ENCODE measurements at regions of chr3 and their contacts with region 1.

Region 1: DNA sequence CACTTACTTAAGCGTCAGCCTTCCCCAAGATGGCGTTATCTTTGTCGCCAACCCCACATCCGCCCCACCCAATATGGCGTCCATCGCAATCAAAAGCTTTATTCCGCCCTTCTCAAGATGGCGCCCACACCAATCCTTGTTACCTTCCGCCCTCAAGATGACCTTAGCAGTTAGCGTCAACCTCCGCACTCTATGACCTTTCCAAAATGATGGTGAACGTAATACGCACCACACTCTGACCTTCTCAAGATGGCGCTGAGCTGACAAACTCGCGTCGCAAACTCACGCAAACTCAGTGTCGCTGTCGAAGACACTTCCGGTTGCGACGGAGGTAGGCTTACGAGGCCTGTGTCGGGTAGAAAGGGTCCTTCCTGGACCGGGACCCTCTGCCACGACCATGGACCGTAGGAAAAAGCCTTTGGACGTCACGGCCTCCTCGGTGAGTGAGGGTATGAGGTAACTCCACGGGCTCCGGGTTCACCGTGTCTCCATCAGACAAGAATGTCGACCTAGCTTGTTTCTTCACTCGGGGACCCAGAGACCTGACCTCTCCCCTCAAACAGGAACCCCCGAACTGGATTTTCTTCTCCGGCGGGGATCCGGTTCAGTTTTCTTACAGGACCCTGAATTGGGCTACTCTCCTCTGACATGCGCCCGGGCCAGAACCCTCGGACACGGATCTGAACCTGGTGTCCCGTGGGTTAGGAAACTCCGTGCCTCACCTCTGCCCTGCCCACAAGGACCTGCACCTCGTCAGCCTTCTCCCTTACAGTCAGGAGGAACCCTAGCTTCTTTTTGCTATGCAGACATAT is at the start of gene CCDC174:
- DNase-seq: peak; percentile 89 to 98
- H3K4me3 ChIP-seq: peak within 1 kb of the TSS; percentile 64 to 80
- H3K27ac ChIP-seq: peak within 1 kb of the TSS; percentile 77 to 91
- H3K4me1 ChIP-seq: peaks cover 7 to 16% of the 10 kb centered on the region in 2 donors
- H3K27me3 ChIP-seq: no peaks in the 10 kb centered on the region
- CTCF ChIP-seq: no peak
- total RNA-seq, gene CCDC174: 5.5 TPM

Region 2: GRCh38 chr3:14178247-14179113 is 473.2 kb before region 1 on chr3 and contains the starts of genes LSM3 and XPC:
- intact Hi-C with region 1: loop called (anchors 1 kb)
- DNase-seq: peak; percentile 92 to 98
- H3K4me3 ChIP-seq: peak within 1 kb of the TSS; percentile 69 to 71
- H3K27ac ChIP-seq: peak within 1 kb of the TSS; percentile 91 to 99
- H3K4me1 ChIP-seq: peaks cover 0 to 31% of the 10 kb centered on the region in 2 donors
- H3K27me3 ChIP-seq: no peaks in the 10 kb centered on the region
- CTCF ChIP-seq: peak in 1 of 3 experiments; percentile 8
- total RNA-seq, gene LSM3: 3.9 TPM
- total RNA-seq, gene XPC: 48.9 TPM

Region 3: DNA sequence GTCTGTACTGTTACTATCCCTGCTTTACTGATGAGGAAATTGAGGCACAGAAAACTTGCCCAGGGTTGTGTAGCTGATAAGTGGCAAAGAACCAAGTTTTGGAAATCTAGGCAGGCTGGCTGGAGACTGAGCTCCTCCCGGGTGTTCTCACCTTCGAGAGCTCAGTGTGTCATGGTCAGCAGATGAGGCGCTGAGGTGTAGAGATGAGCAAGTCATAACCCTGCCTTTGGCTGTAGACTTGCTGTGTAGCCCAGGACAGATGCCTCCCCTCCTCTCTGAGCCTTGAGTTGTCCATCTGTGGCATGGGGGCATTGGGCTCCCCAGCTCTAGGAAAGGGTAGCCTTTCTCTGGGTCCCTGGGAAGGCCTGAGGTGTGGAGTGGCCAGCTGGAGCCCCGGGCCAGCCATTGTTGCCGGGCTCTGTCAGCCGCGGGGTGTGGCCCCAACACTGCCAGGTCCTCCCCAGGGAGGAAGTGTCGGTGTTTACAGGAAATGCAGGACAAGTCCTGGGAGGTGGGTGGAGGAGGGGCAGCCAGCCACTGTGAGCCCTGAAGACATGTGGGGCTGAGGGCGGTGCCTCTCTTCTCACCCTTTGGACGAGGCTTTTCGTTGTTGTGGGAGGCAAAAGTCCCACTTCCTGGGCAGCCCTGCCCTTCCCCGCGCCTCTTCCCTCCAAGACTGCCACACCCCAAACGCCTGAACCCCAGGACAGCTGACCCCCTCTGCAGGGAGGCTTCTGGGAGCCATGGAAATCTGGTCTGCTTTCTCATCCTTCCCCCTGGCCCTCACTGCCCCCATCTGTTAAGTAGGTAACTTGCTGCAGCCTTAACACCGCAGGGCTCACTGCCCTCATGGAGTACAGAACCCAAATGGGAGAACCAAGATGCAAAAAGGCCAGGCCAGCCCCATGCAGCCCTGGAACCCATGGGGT is 196.2 kb after region 1 on chr3:
- intact Hi-C with region 1: no loop called
- DNase-seq: no peak
- H3K4me3 ChIP-seq: no peak overlapping the region
- H3K27ac ChIP-seq: peak overlapping the region in 1 of 2 donors; percentile 6
- H3K4me1 ChIP-seq: no peaks in the 10 kb centered on the region
- H3K27me3 ChIP-seq: no peaks in the 10 kb centered on the region
- CTCF ChIP-seq: no peak

Region 4: DNA sequence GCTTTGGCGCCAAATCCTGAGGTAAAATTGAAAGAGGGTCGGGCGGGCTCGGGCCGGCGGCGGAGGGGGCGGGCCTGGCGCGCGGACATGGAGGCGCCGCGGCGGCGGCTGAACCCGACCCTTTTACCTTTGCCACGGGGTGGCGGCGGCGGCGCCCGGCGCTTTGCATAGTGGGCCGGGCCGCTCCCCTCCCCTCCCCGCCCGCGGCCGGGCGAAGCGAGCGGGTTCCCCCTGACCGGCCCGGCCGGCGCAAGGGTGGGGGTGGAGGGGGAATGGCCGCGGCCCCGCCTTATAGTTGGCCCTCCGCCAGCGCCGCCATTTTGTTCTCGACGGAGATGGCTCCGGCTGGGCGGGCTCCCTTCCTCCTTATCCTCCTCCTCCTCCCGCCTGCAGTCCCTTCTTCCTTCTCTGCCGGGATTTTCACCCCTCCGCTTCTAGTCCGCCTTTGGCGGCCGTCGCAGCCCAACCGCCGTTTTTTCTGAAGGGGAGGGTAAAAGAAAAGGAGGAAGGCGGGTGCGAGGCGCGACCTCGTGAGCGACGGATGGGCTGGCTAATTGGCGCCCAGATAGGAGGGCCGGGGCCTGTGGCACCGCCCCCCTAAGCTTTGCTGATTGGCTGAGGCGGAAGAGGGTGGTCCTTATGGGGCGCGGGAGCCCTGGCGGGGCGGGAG is 296.4 kb after region 1 on chr3:
- intact Hi-C with region 1: loop called (anchors 2 kb)
- DNase-seq: peak; percentile 80 to 97
- H3K4me3 ChIP-seq: peak overlapping the region; percentile 85 to 96
- H3K27ac ChIP-seq: peak overlapping the region; percentile 97 to 98
- H3K4me1 ChIP-seq: peaks cover 0 to 24% of the 10 kb centered on the region in 2 donors
- H3K27me3 ChIP-seq: no peaks in the 10 kb centered on the region
- CTCF ChIP-seq: no peak

Region 5: DNA sequence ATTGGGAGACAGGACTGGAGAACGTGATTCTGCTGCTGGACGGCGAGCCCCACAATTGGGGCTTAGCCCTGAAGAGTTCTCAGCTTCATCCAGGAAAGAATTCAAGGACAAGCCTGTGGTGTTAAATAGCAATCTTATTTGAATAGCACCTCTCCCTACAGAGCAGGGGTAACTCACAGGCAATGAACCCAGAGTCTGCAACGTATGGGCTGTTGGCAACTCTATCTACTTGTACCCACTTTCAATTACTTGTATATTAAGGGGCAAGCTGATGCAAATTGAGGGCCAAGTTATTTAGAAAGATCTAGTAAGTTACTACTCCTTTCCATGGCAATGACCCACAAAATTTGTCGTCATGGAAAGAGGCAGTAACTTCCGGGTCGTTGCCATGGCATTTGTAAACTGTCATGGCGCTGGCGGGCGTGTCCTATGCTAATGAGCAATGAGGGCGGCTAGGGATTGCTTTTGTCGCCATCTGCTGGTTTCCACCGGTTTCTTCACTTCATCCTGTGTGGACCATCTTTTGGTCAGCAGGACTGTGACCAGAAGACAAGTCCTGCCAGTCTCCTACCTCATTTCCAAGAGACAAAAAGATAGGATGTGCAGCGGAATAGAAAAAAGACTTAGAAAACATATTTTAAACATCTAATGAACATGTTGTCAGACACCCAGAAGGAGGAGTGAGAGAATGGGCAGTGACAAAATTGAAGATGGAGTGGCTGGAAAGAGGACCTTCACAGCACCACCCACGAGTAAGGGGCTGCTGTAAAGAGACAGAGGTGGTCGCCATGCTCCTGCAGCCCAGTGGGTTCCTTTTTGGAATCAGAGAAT is 726.5 kb after region 1 on chr3:
- intact Hi-C with region 1: loop called (anchors 5 kb)
- DNase-seq: peak; percentile 89 to 98
- H3K4me3 ChIP-seq: no peak overlapping the region
- H3K27ac ChIP-seq: peak overlapping the region; percentile 61 to 66
- H3K4me1 ChIP-seq: peaks cover 0 to 2% of the 10 kb centered on the region in 2 donors
- H3K27me3 ChIP-seq: no peaks in the 10 kb centered on the region
- CTCF ChIP-seq: peak; percentile 81 to 96 (median 85)